ENCODE measurements at regions of chr14 and their contacts with region 1.

Region 1: GRCh38 chr14:100383727-100384158 is 60.6 kb downstream of the SLC25A47 start:
- DNase-seq: peak; percentile 64 to 73
- ATAC-seq: peak; percentile 87 to 95
- H3K4me3 ChIP-seq: no peak overlapping the region
- H3K27ac ChIP-seq: peak overlapping the region; percentile 33 to 65; a peak in 2 of 6 replicates
- H3K4me1 ChIP-seq: peaks cover 38% of the 10 kb centered on the region
- CTCF ChIP-seq: peak; percentile 86
- EP300 ChIP-seq: no peak
- POLR2A ChIP-seq: no peak
- RAD21 ChIP-seq: peak; percentile 77 to 80

Region 2: GRCh38 chr14:100246826-100247428 is 136.8 kb before region 1 on chr14:
- CTCF ChIA-PET with region 1: no interaction called
- POLR2A ChIA-PET with region 1: no interaction called
- DNase-seq: peak; percentile 73 to 82
- ATAC-seq: peak; percentile 93 to 96
- H3K4me3 ChIP-seq: no peak overlapping the region
- H3K27ac ChIP-seq: no peak overlapping the region
- H3K4me1 ChIP-seq: peaks cover 46% of the 10 kb centered on the region
- CTCF ChIP-seq: peak; percentile 69
- EP300 ChIP-seq: no peak
- POLR2A ChIP-seq: no peak
- RAD21 ChIP-seq: peak; percentile 33 to 41; a peak in 3 of 5 replicates

Region 3: GRCh38 chr14:100328495-100329163 is 55.1 kb before region 1 on chr14:
- CTCF ChIA-PET with region 1: no interaction called
- POLR2A ChIA-PET with region 1: no interaction called
- DNase-seq: no peak
- ATAC-seq: no peak
- H3K4me3 ChIP-seq: no peak overlapping the region
- H3K27ac ChIP-seq: no peak overlapping the region
- H3K4me1 ChIP-seq: no peaks in the 10 kb centered on the region
- CTCF ChIP-seq: no peak
- EP300 ChIP-seq: no peak
- POLR2A ChIP-seq: no peak
- RAD21 ChIP-seq: no peak

Region 4: DNA sequence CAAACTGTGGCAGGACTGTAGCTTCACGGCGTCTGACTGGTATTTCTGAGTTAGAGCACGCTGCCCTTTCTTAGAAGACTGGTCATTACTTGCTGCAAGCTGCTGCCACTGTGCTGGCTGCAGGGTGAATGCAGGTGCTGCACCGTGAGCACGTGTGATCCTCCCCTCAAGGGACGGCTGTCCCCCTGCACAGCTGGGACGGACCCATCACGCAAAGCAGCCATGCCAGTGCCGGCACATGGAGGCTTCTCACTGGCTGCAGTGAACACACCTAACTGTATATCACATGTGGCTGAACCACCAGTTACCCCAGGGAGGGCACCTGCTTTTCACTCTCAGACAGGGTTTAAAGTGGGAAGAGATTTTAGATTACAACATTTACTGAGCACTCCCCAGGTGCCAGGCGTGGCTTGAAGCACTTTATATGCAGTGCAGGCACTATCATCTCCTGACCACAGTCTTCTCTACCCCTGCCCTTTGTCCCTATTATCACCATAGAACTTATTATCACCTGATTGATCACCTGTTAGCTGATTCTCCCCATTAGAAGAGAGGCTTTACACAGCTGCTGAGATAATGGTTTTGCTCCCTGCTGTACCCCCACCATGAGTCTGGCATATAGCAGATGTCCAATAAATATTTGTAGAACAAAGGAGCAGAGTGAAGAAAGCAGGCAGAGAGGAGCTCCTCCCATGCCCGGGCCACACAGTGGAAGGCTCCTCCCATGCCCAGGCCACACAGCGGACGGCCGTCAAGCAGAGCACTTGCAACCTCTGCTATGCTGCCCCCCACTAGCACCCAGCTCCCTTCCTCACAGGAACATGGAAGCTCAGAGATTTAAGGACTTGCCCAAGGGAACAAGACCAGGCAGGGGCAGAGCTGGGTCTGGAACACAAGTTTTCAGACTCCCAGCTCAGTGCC is 34.7 kb before region 1 on chr14:
- CTCF ChIA-PET with region 1: interaction called, 13 read pairs
- POLR2A ChIA-PET with region 1: no interaction called
- DNase-seq: no peak
- ATAC-seq: peak in 1 of 2 experiments; percentile 31; a peak in 2 of 6 replicates
- H3K4me3 ChIP-seq: no peak overlapping the region
- H3K27ac ChIP-seq: no peak overlapping the region
- H3K4me1 ChIP-seq: no peaks in the 10 kb centered on the region
- CTCF ChIP-seq: no peak
- EP300 ChIP-seq: no peak
- POLR2A ChIP-seq: no peak
- RAD21 ChIP-seq: no peak

Region 5: DNA sequence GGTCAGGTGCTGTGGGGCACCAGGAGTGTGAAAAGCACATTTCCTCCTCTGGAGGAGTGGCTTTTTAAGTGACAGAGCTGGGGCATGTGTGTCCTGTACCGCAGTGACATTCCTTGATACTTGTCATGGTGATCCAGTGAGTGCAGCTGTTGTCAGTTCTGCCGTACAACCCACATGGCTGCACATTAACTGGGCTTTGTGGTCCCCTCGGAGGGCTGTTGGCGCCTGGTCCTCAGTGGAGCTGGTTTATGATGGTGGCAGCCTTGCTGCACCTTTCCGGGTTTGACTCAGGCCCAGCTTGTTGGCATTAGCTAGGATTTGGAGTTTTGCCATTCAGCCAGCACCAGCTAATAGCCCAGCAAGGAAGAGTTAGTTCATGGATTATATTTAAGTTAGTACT is 16.4 kb after region 1 on chr14:
- CTCF ChIA-PET with region 1: interaction called, 95 read pairs
- POLR2A ChIA-PET with region 1: no interaction called
- DNase-seq: no peak
- ATAC-seq: no peak
- H3K4me3 ChIP-seq: no peak overlapping the region
- H3K27ac ChIP-seq: peak overlapping the region in 1 of 2 experiments; percentile 42; a peak in 3 of 6 replicates
- H3K4me1 ChIP-seq: peaks cover 38% of the 10 kb centered on the region
- CTCF ChIP-seq: no peak
- EP300 ChIP-seq: no peak
- POLR2A ChIP-seq: no peak
- RAD21 ChIP-seq: no peak

Region 6: DNA sequence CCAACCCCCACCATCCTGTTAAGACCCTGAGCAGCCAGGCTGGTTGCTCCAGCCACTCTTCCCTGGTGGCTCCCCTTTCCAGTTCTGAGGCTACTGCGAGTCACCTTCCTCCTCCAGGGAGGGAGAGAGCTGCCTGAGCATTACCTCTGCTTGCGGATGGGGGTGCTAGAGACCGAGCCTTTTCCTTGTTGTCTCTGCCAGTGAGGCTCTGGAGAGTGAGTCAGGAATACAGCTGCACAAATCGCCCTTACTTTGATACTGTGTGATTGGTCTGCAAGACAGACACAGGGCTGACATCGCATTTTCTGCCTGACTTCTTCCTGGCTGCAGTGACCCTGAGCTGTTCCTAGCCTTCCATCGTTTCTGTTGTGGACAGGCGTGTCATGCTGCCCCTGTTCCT is 33.7 kb after region 1 on chr14:
- CTCF ChIA-PET with region 1: interaction called, 60 read pairs
- POLR2A ChIA-PET with region 1: no interaction called
- DNase-seq: peak; percentile 88 to 94
- ATAC-seq: peak; percentile 97 to 98
- H3K4me3 ChIP-seq: no peak overlapping the region
- H3K27ac ChIP-seq: peak overlapping the region; percentile 73 to 90
- H3K4me1 ChIP-seq: peaks cover 26% of the 10 kb centered on the region
- CTCF ChIP-seq: peak; percentile 77
- EP300 ChIP-seq: no peak
- POLR2A ChIP-seq: no peak
- RAD21 ChIP-seq: peak; percentile 84 to 93

Region 7: DNA sequence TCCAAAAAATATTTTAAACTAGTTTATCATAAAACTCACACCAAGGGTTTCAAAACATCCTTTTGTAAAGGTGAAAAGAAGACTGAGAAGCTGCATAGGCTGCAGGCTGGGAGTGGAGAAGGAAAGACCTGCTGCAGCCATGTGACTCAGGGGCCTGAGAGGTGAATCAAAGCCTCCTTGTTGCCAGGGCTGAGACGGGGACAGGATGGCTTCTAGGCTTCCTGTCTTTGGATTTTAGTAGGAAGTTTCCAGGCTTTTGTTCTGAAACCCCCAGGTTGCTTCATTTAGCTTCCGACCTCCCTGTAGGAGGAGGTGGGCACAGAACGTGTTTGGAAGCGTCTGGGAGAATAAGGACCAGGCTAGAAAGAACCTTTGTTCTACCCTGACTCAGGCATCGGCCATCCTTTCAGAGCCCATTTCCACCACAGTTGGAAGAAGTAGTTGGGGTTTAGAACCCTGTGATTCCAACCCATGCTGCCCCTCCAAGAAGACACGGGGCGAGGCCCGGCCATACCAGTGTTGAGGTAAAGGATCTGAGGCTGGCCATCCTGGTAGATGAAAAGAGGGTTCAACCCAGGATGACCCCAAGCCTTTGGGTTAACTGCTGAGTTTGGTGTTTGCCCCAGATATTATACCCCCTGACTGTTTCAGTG is 61.8 kb after region 1 on chr14:
- CTCF ChIA-PET with region 1: interaction called, 109 read pairs
- POLR2A ChIA-PET with region 1: interaction called, 7 read pairs
- DNase-seq: no peak
- ATAC-seq: no peak
- H3K4me3 ChIP-seq: no peak overlapping the region
- H3K27ac ChIP-seq: no peak overlapping the region; a peak in 1 of 6 replicates
- H3K4me1 ChIP-seq: peaks cover 28% of the 10 kb centered on the region
- CTCF ChIP-seq: no peak
- EP300 ChIP-seq: no peak
- POLR2A ChIP-seq: no peak
- RAD21 ChIP-seq: no peak

Region 8: GRCh38 chr14:100900837-100901390 is 517.2 kb after region 1 on chr14:
- CTCF ChIA-PET with region 1: interaction called, 24 read pairs
- POLR2A ChIA-PET with region 1: no interaction called
- DNase-seq: peak; percentile 35 to 54
- ATAC-seq: peak; percentile 54 to 77; a peak in 3 of 6 replicates
- H3K4me3 ChIP-seq: no peak overlapping the region
- H3K27ac ChIP-seq: 0 out of 6 replicates have a peak overlapping the region, but pooled peaks of 1 of the 2 experiments have one; percentile 44
- H3K4me1 ChIP-seq: peaks cover 5% of the 10 kb centered on the region; the same call in 2 of the 3 replicates
- CTCF ChIP-seq: peak; percentile 54
- EP300 ChIP-seq: no peak
- POLR2A ChIP-seq: no peak
- RAD21 ChIP-seq: peak; percentile 77 to 78

Measured in A549 (cell line).